Astrocyte of the cerebellum (primary cell): ENCODE measurements at regions of chr14 and their contacts with region 1.

Region 1: GRCh38 chr14:73344319-73344718 is 107.0 kb downstream of the PAPLN start:
- DNase-seq: no peak
- H3K4me3 ChIP-seq: no peak overlapping the region
- CTCF ChIP-seq: no peak

Region 2: DNA sequence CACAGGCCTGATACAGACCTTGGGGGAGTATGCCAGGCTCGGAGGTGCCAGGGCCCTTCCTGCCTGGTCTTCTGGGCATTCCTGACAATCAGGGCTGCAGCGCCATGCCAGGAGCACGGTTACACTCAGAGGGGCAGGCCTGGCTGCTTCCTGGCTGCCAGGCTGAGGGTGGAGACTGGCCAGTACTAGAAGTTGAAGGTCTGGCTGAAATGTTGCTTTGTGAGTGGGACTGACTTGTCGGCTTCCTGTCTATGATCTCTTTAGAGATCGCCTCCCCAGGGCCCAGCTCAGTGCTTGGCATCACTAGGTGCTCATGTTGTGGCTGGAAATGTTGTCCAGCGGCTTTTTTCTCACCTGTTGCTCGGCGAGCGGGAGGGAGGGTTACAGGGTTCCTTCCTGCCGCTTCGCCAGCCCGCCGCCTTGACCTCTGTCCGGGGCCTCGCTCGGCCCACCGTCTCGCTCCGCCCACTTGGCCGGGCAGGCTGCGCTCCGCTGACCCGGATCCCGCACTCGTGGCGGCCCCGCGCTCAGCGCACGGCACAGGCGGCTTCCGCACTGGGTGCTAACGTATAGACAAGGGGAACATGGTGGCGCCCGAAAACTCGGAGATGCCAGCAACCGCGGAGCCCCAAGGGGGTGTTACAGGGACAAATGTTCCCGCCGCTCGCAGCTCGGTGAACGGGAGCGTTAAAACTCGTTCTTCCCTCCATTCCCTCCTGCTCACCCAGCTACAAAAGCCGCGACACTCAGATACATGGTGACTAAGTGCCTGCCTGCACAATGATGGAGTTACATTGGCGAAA is 74.4 kb before region 1 on chr14:
- in situ Hi-C with region 1: loop called (anchors 10 kb)
- DNase-seq: no peak
- H3K4me3 ChIP-seq: peak overlapping the region; percentile 26
- CTCF ChIP-seq: no peak

Region 3: DNA sequence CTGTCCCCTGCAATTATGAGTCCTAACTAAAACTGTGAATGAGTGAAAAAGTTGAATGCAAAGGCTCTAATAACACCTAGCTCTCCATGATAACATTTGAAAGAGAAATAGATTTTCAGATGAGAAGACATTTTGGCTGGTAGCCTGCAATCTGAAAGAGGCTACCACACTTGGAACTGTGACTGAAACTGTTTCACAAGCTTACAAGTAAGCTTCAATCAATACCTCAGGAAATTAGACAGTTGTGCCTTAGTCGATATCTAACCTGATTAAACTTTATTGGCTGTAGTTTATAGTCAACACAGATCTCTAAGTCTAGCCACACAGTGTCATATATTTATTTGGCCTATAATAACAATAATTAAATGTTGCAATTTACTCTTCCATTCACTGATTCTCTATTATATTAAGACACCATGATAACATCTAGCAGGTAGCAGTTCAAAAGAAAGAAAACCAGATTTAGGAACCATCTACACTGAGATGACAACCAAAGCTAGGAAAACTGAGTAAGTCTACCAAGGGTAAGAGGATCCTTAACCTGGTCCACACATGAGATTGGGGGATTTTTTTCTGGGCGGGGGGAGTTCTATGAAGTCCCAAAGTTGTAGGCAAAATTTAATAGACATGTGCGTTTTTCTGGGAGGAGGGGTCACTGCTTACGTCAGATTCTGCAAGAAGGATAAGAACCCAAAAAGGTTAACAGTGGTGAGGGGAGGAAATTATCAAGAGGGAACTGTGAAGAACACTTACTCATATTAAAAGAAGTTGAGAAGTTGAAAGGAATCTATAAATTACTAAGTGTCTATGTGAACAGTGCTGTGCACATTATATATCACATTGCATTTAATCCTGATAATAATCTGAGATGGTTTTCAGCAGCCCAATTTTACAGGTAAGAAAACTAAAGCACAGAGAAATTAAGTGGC is 48.3 kb after region 1 on chr14:
- in situ Hi-C with region 1: loop called (anchors 5 kb)
- DNase-seq: no peak
- H3K4me3 ChIP-seq: no peak overlapping the region
- CTCF ChIP-seq: no peak